BJ (cell line): ENCODE measurements at regions of chr7 and their contacts with region 1.

Region 1: GRCh38 chr7:39948956-39949928 is 814 bp upstream of the CDK13 start:
- DNase-seq: peak; percentile 99
- H3K4me3 ChIP-seq: peak overlapping the region; percentile 65
- H3K27me3 ChIP-seq: no peaks in the 10 kb centered on the region
- CTCF ChIP-seq: peak; percentile 18; the same call in 1 of the 2 replicates

Region 2: DNA sequence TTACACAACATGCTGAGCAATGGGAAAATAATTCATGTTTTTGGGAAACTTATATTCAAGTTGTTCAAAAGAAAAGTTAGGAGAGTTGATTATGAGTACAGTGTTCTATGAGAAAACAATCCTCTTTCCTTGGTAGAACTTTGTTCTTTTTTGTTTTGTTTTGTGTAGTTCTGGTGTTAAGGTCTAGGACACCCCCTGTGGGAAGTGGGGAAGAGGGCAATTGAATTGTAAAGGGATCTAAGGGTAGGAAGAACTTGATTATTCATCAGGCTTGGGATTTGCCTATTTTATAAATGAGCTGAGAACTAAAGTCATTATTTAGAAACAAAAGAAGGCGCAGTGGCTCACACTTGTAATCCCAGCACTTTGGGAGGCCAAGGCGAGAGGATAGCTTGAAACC is 25.1 kb before region 1 on chr7:
- CTCF ChIA-PET with region 1: no interaction called
- POLR2A ChIA-PET with region 1: no interaction called
- DNase-seq: no peak
- H3K4me3 ChIP-seq: no peak overlapping the region
- H3K27me3 ChIP-seq: peaks cover 4% of the 10 kb centered on the region; the same call in 1 of the 2 replicates
- CTCF ChIP-seq: 0 out of 2 replicates have a peak, but pooled peaks have one; percentile 3

Region 3: GRCh38 chr7:39936761-39937160 is 12.5 kb before region 1 on chr7:
- CTCF ChIA-PET with region 1: no interaction called
- POLR2A ChIA-PET with region 1: interaction called, 12 read pairs
- DNase-seq: no peak
- H3K4me3 ChIP-seq: no peak overlapping the region
- H3K27me3 ChIP-seq: 0 out of 2 replicates have a peak, but pooled peaks cover 1% of the 10 kb centered on the region
- CTCF ChIP-seq: no peak